OCI-LY7 (cell line): ENCODE measurements at regions of chr2 and their contacts with region 1.

Region 1: DNA sequence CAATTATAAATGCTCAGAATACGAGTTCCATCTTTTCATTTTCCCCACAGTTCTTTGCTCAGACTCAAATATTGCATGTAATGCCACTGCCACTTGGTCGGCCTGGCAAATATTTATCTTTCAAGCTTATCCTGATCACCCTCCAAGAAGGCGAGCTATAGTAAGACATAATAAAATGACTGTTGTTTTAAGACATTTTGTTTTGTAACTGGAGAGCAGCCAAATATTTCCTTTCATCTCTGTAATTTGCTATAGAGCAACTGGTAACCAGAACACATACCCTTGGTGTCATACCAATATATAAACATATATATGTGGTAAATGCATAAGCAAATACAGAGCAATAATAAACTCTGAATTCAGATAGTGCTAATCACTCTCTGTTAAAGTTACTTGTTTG is 7.3 kb upstream of the ATL2 start:
- DNase-seq: no peak
- H3K4me3 ChIP-seq: no peak overlapping the region
- H3K27ac ChIP-seq: no peak overlapping the region
- H3K4me1 ChIP-seq: peaks cover 33% of the 10 kb centered on the region
- CTCF ChIP-seq: no peak

Region 2: DNA sequence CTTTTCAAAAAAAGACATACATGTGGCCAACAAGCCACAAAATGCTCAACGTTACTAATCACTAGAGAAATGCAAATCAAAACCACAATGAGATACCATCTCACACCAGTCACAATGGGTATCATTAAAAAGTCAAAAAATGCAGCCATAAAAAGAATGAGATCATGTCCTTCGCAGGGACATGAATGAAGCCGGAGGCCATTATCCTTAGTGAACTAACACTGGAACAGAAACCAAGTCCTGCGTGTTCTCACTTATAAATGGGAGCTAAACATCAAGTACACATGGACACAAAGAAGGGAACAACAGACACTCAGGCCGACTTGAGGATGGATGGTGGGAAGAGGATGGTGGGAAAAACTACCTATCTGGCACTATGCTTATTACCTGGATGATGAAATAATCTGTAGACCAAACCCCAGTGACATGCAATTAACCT is 10.6 kb after region 1 on chr2:
- CTCF ChIA-PET with region 1: no interaction called
- POLR2A ChIA-PET with region 1: interaction called, 14 read pairs
- intact Hi-C with region 1: no loop called
- DNase-seq: no peak
- H3K4me3 ChIP-seq: peak overlapping the region; percentile 19
- H3K27ac ChIP-seq: no peak overlapping the region
- H3K4me1 ChIP-seq: peaks cover 32% of the 10 kb centered on the region
- CTCF ChIP-seq: no peak

Region 3: DNA sequence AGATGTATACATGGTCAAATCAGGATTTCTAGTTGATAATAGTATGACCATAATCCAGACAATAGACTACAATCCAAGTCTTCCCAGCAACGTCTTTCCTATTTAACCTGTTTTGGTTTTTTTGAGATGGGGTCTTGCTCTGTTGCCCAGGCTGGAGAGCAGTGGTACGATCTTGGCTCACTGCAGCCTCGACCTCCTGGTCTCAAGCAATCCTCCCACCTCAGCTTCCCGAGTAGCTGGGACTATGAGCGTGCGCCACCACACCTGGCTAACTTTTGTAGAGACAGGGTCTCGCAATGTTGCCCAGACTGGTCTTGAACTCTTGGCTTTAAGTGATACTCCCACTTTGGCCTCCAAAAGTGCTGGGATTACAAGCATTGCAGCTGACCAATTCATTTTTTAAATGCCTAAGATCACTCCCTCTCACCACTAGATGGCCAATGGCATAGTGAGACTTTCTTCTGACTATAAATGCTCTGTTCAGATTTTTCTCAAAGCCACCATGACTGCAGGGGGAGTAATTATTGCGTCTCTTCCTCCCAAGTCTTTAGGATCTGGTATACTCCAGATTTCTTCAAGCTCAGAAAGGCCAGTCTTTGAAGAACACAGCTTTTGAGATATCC is 170.7 kb after region 1 on chr2:
- CTCF ChIA-PET with region 1: no interaction called
- POLR2A ChIA-PET with region 1: no interaction called
- intact Hi-C with region 1: no loop called
- DNase-seq: peak; percentile 48
- H3K4me3 ChIP-seq: no peak overlapping the region
- H3K27ac ChIP-seq: no peak overlapping the region
- H3K4me1 ChIP-seq: peaks cover 7% of the 10 kb centered on the region
- CTCF ChIP-seq: peak; percentile 78